ENCODE measurements at regions of chr19 and their contacts with region 1.

Region 1: DNA sequence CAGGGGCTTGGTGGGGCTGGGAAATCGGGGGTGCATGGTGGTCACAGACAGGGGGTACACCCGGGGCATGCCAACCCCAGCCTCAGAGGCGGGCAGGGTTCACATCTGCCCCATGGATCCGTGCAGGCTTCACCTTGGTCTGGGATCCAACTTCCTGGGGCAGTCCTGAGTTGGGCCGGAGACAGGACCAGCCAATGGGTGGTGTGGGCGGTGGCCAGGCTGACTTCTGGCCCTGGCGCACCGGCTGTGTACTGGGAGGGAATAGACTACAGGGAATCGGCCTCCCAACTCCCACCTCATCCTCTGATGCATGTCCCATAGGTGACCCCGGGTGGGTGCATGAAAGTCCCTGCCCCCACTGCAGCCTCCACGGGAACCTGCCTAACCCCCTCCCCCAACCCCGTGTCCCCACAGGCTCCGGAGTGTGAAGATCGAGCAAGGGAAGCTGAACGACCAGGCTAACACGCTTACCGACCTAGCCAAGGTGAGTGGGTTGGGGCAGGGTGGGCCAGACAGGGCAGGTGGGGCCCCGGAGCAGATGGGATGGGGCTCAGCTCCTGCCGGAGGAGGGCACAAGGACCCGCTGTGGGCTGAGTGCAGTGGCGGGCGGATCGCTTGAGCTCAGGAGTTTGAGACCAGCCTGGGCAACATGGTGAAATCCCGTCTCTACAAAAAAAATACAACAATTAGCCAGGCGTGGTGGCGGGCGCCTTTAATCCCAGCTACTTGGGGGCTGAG is 14.7 kb upstream of the ARRDC2 start:
- DNase-seq: no peak
- CTCF ChIP-seq: no peak

Region 2: GRCh38 chr19:17938092-17938845 is 55.0 kb before region 1 on chr19:
- in situ Hi-C with region 1: loop called (anchors 5 kb)
- DNase-seq: peak; percentile 91
- CTCF ChIP-seq: peak; percentile 90

Measured in GM13976 (cell line).